Transverse colon (tissue), 4 donors: ENCODE measurements at regions of chr2 and their contacts with region 1.

Region 1: GRCh38 chr2:177921726-177922125 is 150.9 kb downstream of the PDE11A start:
- DNase-seq: no peak
- H3K4me3 ChIP-seq: no peak overlapping the region
- H3K27ac ChIP-seq: no peak overlapping the region
- H3K4me1 ChIP-seq: no peaks in the 10 kb centered on the region
- H3K27me3 ChIP-seq: no peaks in the 10 kb centered on the region
- CTCF ChIP-seq: no peak
- EP300 ChIP-seq: no peak
- POLR2A ChIP-seq: no peak

Region 2: DNA sequence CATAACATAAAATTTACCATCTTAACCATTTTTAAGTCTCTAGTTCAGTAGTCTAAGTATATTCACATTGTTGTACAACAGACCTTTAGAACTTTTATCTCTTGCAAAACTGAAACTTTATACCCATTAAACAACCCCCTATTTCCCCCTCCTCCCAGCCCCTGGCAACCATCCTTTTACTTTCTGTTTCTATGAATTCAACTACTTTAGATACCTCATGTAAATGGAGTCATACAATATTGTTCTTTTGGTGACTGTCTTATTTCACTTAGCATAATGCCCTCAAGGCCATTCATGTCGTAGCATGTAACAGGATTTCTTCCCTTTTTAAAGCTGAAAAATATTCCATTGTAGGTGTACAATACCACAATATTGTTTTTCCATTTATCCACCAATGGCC is 21.0 kb after region 1 on chr2:
- in situ Hi-C with region 1: no loop called
- intact Hi-C with region 1: loop called (anchors 1 kb)
- DNase-seq: no peak
- H3K4me3 ChIP-seq: no peak overlapping the region
- H3K27ac ChIP-seq: no peak overlapping the region
- H3K4me1 ChIP-seq: no peaks in the 10 kb centered on the region
- H3K27me3 ChIP-seq: no peaks in the 10 kb centered on the region
- CTCF ChIP-seq: no peak
- EP300 ChIP-seq: no peak
- POLR2A ChIP-seq: no peak